Heart right ventricle (tissue), 16 donors: ENCODE measurements at regions of chr13 and their contacts with region 1.

Region 1: DNA sequence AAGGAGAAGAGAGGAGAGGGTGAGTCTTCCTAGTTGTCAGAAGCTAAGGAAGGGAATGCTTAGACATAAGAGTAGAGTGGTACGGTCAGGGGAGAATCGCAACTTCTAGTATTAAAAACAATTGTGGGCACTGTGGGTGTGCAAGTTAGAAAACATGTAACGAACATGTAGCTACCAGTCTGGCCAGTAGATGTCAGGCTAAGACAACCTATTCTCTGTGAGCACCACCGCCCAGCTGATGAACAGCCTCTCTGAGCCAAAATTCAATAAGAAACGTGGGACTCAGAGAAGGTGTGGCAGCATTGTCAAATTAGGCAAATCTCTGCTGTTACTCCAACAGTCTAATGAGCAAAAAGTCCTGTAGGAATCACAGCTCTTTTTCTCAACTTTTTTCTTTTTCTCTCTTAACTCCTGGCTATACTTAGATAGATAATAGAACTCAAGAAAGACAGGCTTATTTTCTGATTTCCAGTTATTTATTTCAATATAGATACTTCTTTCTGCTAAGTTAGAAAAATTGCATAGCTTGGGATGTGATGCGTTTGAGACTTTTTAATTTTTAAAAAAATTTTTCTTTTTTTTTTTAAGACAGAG is 186.2 kb downstream of the USP12 start:
- DNase-seq: peak in 1 of 2 donors; percentile 76
- ATAC-seq: peak; percentile 44 to 78 (median 66)
- H3K4me3 ChIP-seq: no peak overlapping the region
- H3K27ac ChIP-seq: no peak overlapping the region
- H3K4me1 ChIP-seq: peaks cover 0 to 27% (median 13%) of the 10 kb centered on the region in 9 donors
- H3K27me3 ChIP-seq: no peaks in the 10 kb centered on the region
- CTCF ChIP-seq: peak; percentile 49 to 90 (median 80)

Region 2: DNA sequence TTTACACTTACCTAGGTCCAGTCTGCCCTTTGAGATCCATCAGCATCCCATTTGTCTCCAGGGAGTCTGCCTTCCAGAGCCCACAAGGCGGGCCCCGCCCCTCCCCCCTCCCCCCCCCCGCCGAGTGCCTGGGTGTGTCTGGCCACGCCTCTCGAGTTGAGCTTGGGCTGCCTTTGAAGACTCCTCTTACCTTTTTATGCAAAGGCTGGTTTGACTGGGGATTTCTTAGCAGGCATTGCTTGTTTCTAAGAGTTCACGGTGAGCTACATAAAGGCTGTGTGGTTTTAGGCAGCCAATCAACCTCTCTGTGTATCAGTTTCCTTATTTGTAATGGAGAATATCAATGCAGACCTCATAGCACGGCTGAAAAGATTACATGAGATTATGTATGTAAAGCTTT is 236.1 kb before region 1 on chr13:
- intact Hi-C with region 1: no loop called
- DNase-seq: no peak
- ATAC-seq: no peak
- H3K4me3 ChIP-seq: no peak overlapping the region
- H3K27ac ChIP-seq: no peak overlapping the region
- H3K4me1 ChIP-seq: no peaks in the 10 kb centered on the region
- H3K27me3 ChIP-seq: peaks cover 0 to 58% (median 28%) of the 10 kb centered on the region in 7 donors
- CTCF ChIP-seq: no peak

Region 3: GRCh38 chr13:26946684-26947343 is 38.6 kb before region 1 on chr13:
- intact Hi-C with region 1: loop called in 2 of 10 experiments (anchors 2 to 5 kb)
- DNase-seq: no peak
- ATAC-seq: peak in 7 of 8 donors; percentile 65 to 84 (median 72)
- H3K4me3 ChIP-seq: no peak overlapping the region
- H3K27ac ChIP-seq: no peak overlapping the region
- H3K4me1 ChIP-seq: peaks cover 0 to 14% (median 0%) of the 10 kb centered on the region in 9 donors
- H3K27me3 ChIP-seq: no peaks in the 10 kb centered on the region
- CTCF ChIP-seq: peak; percentile 65 to 82 (median 76)

Region 4: DNA sequence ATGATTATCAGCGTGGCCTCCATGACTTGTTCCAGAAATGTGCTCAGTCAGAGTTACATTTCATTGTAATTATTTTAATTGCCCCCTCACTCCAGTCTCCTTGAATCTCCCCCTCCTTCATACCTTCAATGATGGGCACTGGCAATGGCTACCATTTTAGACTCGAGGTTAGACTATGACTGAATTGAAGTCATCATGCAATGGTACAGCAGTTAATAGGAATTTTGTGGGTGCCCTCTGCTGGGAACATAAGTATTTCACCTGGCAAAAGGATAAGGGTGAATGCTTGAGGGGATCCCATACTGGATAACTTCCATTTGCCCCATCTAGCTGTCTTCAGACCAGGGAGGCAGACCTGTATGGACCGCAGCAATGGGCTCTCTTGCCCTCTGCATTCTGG is 218.5 kb after region 1 on chr13:
- intact Hi-C with region 1: loop called in 6 of 10 experiments (anchors 2 to 10 kb)
- DNase-seq: no peak
- ATAC-seq: peak in 1 of 8 donors; percentile 51
- H3K4me3 ChIP-seq: no peak overlapping the region
- H3K27ac ChIP-seq: no peak overlapping the region
- H3K4me1 ChIP-seq: no peaks in the 10 kb centered on the region
- H3K27me3 ChIP-seq: no peaks in the 10 kb centered on the region
- CTCF ChIP-seq: peak in 7 of 9 donors; percentile 19 to 44 (median 32)

Region 5: GRCh38 chr13:27270594-27271520 is 285.5 kb after region 1 on chr13 and contains the start of gene RASL11A:
- intact Hi-C with region 1: loop called in 2 of 10 experiments (anchors 5 kb)
- DNase-seq: peak; percentile 85 to 90
- ATAC-seq: peak; percentile 93 to 95 (median 94)
- H3K4me3 ChIP-seq: peak within 1 kb of the TSS; percentile 50 to 91 (median 78)
- H3K27ac ChIP-seq: peak within 1 kb of the TSS; percentile 79 to 95 (median 92)
- H3K4me1 ChIP-seq: peaks cover 0 to 68% (median 33%) of the 10 kb centered on the region in 9 donors
- H3K27me3 ChIP-seq: no peaks in the 10 kb centered on the region
- CTCF ChIP-seq: peak; percentile 91 to 99 (median 97)
- total RNA-seq, gene RASL11A: 1.8 to 68.7 (median 3.1) TPM

Region 6: DNA sequence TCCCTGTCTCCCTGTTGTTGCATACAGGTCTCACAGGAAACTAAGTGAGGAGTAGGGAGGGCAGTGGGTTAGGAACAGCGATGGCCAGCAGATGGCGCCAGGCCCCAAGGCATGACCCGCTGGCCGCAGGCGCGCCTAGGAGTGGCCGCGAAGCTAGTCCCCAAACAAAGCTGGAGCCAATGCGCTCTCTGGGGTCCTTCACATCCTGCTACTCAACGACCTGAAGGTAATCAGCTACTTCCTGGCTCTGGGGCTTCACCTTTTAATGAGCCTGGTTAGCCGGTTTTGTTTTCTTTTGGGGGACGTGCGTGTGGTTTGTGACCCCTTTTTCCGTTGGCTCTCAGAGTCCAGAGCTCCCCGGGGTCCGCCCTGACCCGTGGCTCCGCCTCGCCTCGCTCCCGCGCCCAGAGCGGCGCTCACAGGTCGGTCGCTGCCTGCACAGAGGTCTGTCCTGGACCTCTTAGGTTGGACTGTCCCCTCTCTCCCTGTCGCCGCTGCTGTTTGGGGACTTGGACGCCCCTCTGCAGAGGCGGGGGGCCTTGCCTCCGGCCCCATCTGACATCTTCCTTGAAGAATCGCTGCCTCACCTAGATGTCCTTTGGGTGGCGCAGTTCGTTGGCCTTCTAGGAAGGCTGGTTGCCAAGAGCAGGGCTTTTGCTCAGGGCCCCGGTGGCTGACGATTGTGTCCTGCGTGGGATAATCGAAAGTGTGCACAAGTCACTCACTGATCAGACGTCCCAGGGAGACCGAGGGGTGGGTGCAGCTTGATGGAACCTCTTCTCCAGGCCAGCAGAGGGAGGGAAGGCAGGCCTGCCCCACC is 376.9 kb after region 1 on chr13:
- intact Hi-C with region 1: loop called (anchors 1 to 5 kb)
- DNase-seq: peak; percentile 82 to 88
- ATAC-seq: peak; percentile 92 to 97 (median 95)
- H3K4me3 ChIP-seq: peak overlapping the region; percentile 29 to 61 (median 51)
- H3K27ac ChIP-seq: no peak overlapping the region
- H3K4me1 ChIP-seq: peaks cover 0 to 10% (median 5%) of the 10 kb centered on the region in 9 donors
- H3K27me3 ChIP-seq: peaks cover 0 to 17% (median 6%) of the 10 kb centered on the region in 7 donors
- CTCF ChIP-seq: peak; percentile 87 to 97 (median 95)

Region 7: DNA sequence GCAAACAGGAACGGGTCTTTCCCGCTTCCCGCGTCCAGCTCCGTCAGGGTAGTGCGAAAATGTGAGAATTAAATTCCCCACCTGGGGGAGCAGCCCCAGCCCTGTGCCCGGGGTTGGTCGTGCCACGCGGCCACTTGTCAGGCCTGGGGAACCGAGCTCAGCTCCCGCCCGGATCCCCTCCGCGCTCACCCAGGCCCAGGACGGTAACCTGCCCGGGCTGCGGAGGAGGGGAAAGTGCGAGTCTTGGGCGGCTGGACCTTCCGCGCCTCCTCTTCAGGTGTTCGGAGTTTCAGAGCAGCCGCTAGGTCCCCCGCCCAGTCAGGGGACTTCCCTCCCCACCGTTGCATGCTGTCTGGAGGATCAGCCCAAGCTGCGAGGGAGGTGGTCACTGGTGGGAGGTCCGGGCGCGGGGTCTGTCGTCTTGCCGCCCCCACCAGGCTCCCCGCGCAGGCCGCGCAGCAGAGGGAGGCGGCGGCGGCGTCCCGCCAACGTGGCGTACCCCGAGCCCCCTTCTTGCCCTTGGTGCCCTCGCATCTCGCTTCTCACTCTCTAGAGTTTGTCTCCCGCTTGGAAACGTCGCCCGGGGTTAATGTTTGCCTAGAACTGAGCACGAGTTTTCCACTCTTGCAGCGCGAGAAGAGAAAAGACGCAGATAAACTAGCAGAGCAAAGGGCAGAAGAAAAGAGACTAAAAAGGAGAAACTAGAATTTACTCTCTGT is 995.1 kb after region 1 on chr13:
- intact Hi-C with region 1: loop called in 1 of 10 experiments (anchors 10 kb)
- DNase-seq: no peak
- ATAC-seq: no peak
- H3K4me3 ChIP-seq: no peak overlapping the region
- H3K27ac ChIP-seq: no peak overlapping the region
- H3K4me1 ChIP-seq: peaks cover 0 to 37% (median 26%) of the 10 kb centered on the region in 9 donors
- H3K27me3 ChIP-seq: peaks cover 64 to 99% (median 97%) of the 10 kb centered on the region in 7 donors
- CTCF ChIP-seq: no peak